Heart left ventricle (tissue), 16 donors: ENCODE measurements at regions of chr1 and their contacts with region 1.

Region 1: DNA sequence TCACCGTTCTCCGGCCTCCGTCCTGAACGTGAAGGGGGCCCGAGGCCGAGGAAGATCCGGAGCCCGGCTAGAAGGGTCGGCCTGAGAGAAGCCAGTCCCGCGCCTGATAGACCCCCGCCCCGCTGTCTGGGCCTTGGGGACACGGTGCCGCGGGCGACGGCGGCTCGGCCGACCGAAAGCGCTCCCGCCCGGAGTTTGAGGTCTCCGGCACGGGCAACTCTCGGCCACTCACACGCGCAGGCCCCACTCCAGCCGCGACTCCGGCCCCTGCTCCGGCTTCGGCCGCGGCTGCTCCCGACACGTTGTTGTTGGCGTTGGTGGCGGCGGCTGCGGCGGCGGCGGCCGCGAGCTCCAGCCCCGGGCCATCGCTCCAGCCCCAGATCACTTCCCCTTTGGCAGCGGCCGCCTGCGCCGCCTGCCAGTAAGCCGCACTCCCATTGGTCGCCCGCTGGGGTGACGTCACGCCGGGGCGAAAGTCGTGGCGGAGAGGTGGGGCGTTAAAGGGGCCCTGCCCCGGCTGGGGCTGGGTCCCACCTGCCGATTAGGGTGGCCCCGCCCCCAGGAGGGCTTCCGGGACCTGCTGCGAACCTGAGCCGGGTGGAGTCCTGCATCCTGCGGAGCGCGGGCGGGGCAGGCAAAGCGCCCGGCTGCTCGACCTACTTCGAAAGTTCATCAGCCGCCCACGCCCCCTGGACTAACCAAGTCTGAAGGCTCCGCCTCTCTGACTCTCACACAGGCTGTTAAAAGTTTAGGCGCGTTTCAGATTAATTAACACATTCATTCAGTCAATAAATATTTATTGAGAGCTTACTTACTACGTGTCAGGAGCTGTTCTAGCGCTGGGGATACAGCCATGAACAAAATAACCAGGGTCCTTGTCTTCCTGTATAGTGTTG is at the start of gene EFCAB14:
- DNase-seq: peak; percentile 95 to 98 (median 96)
- ATAC-seq: peak; percentile 98 to 99 (median 99)
- H3K4me3 ChIP-seq: peak within 1 kb of the TSS; percentile 59 to 99 (median 90)
- H3K27ac ChIP-seq: peak within 1 kb of the TSS; percentile 24 to 88 (median 84)
- H3K4me1 ChIP-seq: peaks cover 9 to 37% (median 27%) of the 10 kb centered on the region in 12 donors
- H3K27me3 ChIP-seq: no peaks in the 10 kb centered on the region
- CTCF ChIP-seq: no peak
- POLR2A ChIP-seq: peak in 1 of 2 donors; percentile 83
- total RNA-seq, gene EFCAB14: 46.6 to 91.9 (median 64.0) TPM

Region 2: DNA sequence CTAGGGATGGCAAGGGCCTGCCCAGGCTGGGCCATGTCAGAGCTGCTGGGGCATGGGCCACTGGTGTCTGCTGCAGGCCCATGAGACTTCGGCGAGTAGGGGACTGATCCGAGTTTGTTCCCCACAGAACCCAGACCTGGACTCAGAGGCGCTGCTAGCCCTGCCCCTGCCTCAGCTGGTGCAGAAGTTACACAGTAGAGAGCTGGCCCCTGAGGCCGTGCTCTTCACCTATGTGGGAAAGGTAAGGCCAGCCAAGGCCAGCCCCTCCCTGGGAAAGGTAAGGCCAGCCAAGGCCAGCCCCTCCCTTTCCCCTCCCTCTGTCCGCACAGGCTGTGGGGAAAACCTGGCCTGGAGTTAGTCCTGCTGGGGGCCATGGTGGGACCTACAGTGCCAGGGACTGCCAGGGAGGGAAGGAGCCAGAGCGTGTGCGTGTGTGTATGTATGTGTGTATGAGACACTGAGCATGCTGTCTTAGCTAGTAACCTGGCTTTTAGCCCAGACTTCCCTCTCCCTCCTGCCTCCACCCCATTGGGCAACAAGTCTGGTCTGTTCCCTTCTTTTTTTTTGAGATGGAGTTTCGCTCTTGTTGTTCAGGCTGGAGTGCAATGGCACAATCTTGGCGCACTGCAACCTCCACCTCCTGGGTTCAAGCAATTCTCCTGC is 316.9 kb before region 1 on chr1:
- intact Hi-C with region 1: loop called in 3 of 10 experiments (anchors 5 to 10 kb)
- DNase-seq: peak in 4 of 5 donors; percentile 40 to 60 (median 44)
- ATAC-seq: peak; percentile 40 to 78 (median 68)
- H3K4me3 ChIP-seq: no peak overlapping the region
- H3K27ac ChIP-seq: no peak overlapping the region
- H3K4me1 ChIP-seq: peaks cover 0 to 37% (median 6%) of the 10 kb centered on the region in 12 donors
- H3K27me3 ChIP-seq: no peaks in the 10 kb centered on the region
- CTCF ChIP-seq: no peak
- POLR2A ChIP-seq: no peak

Region 3: DNA sequence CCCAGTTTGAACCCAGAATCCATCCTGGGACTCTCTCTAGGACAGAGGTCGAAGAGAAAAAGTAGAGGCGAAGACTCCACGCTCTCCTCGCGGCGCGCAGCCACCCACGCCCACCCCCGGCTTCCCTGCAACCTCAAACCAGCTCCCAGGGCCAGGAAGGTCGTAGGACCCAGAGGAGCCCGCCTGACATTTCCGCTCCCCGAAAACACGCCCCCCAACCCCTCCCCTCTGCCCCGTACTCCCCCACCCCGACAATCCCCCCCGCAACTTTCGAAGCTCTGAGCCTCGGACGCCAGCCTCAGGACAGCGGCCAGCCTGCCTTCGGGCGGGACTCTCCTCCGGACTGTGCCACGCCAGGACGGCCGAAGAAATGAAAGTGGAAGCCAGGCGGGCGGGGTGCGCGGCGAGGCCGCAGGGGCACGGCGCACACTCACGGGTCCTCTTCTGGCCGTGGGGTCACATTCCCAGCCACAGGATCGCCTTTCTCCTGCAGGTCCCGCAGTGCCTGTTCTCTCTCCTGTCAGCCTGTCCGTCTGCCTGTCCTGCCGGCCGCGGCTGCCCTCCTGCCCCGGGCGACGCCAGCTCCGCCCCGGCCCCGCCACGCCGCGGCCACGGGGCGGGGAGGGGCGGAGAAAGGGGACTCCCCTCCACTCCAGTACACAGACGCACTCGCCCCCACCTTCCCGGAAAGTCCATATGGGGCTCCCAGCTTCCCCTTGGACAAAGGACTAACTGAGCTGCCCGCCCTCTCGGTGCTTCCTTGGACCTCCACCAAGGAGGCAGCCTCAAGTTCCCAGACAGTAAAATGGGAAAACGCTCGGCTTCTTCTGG is 102.5 kb before region 1 on chr1 and contains the start of gene MOB3C:
- intact Hi-C with region 1: loop called in 9 of 10 experiments (anchors 2 to 10 kb)
- DNase-seq: peak; percentile 90 to 94 (median 91)
- ATAC-seq: peak; percentile 86 to 95 (median 92)
- H3K4me3 ChIP-seq: peak within 1 kb of the TSS; percentile 59 to 95 (median 77)
- H3K27ac ChIP-seq: peak within 1 kb of the TSS; percentile 84 to 97 (median 92)
- H3K4me1 ChIP-seq: peaks cover 7 to 54% (median 49%) of the 10 kb centered on the region in 12 donors
- H3K27me3 ChIP-seq: no peaks in the 10 kb centered on the region
- CTCF ChIP-seq: no peak
- POLR2A ChIP-seq: peak; percentile 80 to 94
- total RNA-seq, gene MOB3C: 6.9 to 24.0 (median 11.2) TPM

Region 4: GRCh38 chr1:46667782-46668760 is 50.9 kb before region 1 on chr1 and contains the start of gene ATPAF1:
- intact Hi-C with region 1: loop called in 4 of 10 experiments (anchors 5 kb)
- DNase-seq: peak; percentile 71 to 86 (median 80)
- ATAC-seq: peak; percentile 73 to 94 (median 90)
- H3K4me3 ChIP-seq: peak within 1 kb of the TSS; percentile 66 to 98 (median 92)
- H3K27ac ChIP-seq: peak within 1 kb of the TSS; percentile 74 to 92 (median 83)
- H3K4me1 ChIP-seq: peaks cover 4 to 31% (median 22%) of the 10 kb centered on the region in 12 donors
- H3K27me3 ChIP-seq: no peaks in the 10 kb centered on the region
- CTCF ChIP-seq: peak in 1 of 12 donors; percentile 5
- POLR2A ChIP-seq: peak in 1 of 2 donors; percentile 42
- total RNA-seq, gene ATPAF1: 147 to 237 (median 179) TPM

Region 5: DNA sequence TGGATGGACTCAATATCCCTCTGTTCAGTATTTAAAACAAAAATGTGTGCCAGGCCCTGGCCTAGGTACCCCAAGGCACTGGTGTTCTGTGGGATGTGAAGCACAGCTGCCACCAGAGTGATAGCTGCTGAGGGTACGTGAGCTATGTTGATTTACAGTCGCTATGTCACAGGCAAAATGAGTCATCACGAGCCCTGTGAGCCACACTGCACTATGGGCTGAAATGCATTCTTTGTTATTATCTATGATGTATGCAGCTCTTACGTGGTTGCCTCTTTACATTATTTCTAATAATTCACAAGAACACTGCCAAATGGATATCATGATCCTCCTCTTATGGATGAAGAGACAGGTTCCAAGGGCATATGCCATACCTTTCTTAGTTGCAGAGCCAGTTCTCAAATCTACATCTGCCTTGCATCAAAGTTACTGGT is 45.2 kb before region 1 on chr1:
- intact Hi-C with region 1: loop called in 4 of 10 experiments (anchors 5 kb)
- DNase-seq: no peak
- ATAC-seq: no peak
- H3K4me3 ChIP-seq: no peak overlapping the region
- H3K27ac ChIP-seq: no peak overlapping the region
- H3K4me1 ChIP-seq: peaks cover 0 to 13% (median 0%) of the 10 kb centered on the region in 12 donors
- H3K27me3 ChIP-seq: no peaks in the 10 kb centered on the region
- CTCF ChIP-seq: no peak
- POLR2A ChIP-seq: no peak

Region 6: DNA sequence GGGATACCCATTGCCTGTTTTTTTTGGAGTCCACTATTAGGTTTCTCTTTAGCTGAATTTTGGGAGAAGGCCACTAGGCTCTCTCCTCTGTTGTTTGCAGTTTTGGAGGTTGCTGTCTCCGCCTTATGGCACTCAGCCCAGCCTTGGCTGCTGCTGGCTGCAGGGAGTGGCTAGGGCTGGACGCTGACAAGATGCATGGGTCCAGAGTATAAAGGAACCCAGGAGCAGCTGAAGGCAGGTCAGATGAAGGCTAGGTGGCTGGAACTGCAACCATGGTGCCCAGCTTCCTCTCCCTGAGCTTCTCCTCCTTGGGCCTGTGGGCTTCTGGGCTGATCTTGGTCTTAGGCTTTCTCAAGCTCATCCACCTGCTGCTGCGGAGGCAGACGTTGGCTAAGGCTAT is 79.8 kb after region 1 on chr1 and contains the start of gene CYP4B1:
- intact Hi-C with region 1: no loop called
- DNase-seq: peak; percentile 45 to 84 (median 74)
- ATAC-seq: peak; percentile 92 to 95 (median 94)
- H3K4me3 ChIP-seq: peak within 1 kb of the TSS in 10 of 12 donors; percentile 10 to 59 (median 38)
- H3K27ac ChIP-seq: peak within 1 kb of the TSS in 9 of 12 donors; percentile 20 to 87 (median 45)
- H3K4me1 ChIP-seq: peaks cover 0 to 16% (median 5%) of the 10 kb centered on the region in 12 donors
- H3K27me3 ChIP-seq: no peaks in the 10 kb centered on the region
- CTCF ChIP-seq: no peak
- POLR2A ChIP-seq: peak; percentile 12 to 96
- total RNA-seq, gene CYP4B1: 1.5 to 103 (median 10.0) TPM in 8 of 9 donors, not detected in the other